GM12878 (cell line): ENCODE measurements at regions of chr14 and their contacts with region 1.

Region 1: DNA sequence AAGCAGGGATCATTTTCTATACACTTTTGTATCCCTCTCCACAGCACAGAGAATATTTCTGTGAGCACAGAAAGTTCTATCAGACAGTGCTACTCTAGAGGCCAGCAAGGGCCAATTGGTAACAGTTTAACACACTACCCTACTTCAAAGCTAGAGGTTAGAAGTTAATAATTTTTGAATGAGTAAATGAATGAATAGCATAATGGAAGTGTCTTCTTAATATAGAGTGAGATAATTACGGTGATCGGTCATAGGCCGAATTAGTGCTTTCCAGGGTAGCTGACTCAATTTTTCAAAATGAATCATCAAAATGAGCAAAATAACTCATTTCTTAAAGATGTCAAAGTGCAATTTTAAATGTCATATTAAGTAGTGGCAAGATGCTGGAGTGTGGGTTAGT is 67.0 kb upstream of the CCDC198 start:
- DNase-seq: peak; percentile 38
- ATAC-seq: peak; percentile 90
- H3K4me3 ChIP-seq: no peak overlapping the region
- H3K27ac ChIP-seq: no peak overlapping the region
- H3K4me1 ChIP-seq: no peaks in the 10 kb centered on the region
- H3K27me3 ChIP-seq: no peaks in the 10 kb centered on the region
- CTCF ChIP-seq: no peak
- EP300 ChIP-seq: peak in 1 of 2 experiments; percentile 80; a peak in 2 of 4 replicates
- POLR2A ChIP-seq: no peak
- RAD21 ChIP-seq: no peak

Region 2: GRCh38 chr14:57244106-57244505 is 316.6 kb before region 1 on chr14:
- CTCF ChIA-PET with region 1: no interaction called
- POLR2A ChIA-PET with region 1: no interaction called
- RAD21 ChIA-PET with region 1: no interaction called
- SMC1A ChIA-PET with region 1: no interaction called
- in situ Hi-C with region 1: no loop called
- intact Hi-C with region 1: no loop called
- DNase-seq: no peak
- ATAC-seq: no peak
- H3K4me3 ChIP-seq: no peak overlapping the region
- H3K27ac ChIP-seq: no peak overlapping the region
- H3K4me1 ChIP-seq: no peaks in the 10 kb centered on the region
- H3K27me3 ChIP-seq: no peaks in the 10 kb centered on the region
- CTCF ChIP-seq: no peak
- EP300 ChIP-seq: no peak
- POLR2A ChIP-seq: no peak
- RAD21 ChIP-seq: no peak

Region 3: GRCh38 chr14:57493467-57494181 is 67.1 kb before region 1 on chr14 and contains the start of gene CCDC198:
- CTCF ChIA-PET with region 1: no interaction called
- POLR2A ChIA-PET with region 1: no interaction called
- RAD21 ChIA-PET with region 1: interaction called, 3 read pairs
- SMC1A ChIA-PET with region 1: interaction called, 10 read pairs
- in situ Hi-C with region 1: loop called (anchors 5 kb)
- intact Hi-C with region 1: no loop called
- DNase-seq: peak; percentile 65
- ATAC-seq: peak; percentile 76
- H3K4me3 ChIP-seq: no peak within 1 kb of the TSS
- H3K27ac ChIP-seq: no peak within 1 kb of the TSS
- H3K4me1 ChIP-seq: no peaks in the 10 kb centered on the region
- H3K27me3 ChIP-seq: no peaks in the 10 kb centered on the region
- CTCF ChIP-seq: no peak
- EP300 ChIP-seq: no peak
- POLR2A ChIP-seq: no peak
- RAD21 ChIP-seq: no peak
- polyA plus RNA-seq, gene CCDC198: 1.3 to 1.9 TPM

Region 4: DNA sequence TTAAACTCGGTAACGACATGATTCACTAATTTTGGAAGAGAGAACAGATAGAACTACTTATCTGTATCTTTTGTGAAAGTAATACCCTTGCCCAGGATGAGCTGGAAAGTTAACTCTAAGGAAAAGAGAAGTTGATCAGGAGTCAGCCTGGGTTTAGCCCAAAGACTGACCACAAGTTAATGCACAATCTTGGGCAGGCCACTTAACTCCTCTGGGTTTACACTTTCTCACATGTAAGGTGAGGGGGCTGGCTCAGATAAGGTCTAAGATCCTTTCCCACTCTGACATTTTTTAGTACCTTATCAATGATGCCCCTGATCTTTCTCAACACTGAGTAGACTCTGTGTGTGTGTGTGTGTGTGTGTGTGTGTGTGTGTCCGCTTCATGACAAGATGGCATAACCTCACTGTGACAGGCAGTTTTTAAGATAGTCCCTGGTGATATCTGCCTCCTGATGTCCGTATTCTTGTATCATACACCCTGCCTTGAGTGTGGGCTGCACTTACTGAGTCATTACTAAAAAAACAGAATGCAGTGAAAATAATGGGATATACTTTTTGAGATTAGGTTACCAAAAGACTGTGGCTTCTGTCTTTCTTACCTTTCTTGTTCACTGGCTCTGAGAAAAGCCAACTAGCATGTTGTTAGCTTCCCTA is 10.8 kb before region 1 on chr14:
- CTCF ChIA-PET with region 1: interaction called, 19 read pairs
- POLR2A ChIA-PET with region 1: interaction called, 6 read pairs
- RAD21 ChIA-PET with region 1: interaction called, 26 read pairs
- SMC1A ChIA-PET with region 1: interaction called, 82 read pairs
- in situ Hi-C with region 1: no loop called
- intact Hi-C with region 1: no loop called
- DNase-seq: no peak
- ATAC-seq: peak; percentile 70
- H3K4me3 ChIP-seq: no peak overlapping the region
- H3K27ac ChIP-seq: no peak overlapping the region
- H3K4me1 ChIP-seq: no peaks in the 10 kb centered on the region
- H3K27me3 ChIP-seq: no peaks in the 10 kb centered on the region
- CTCF ChIP-seq: no peak
- EP300 ChIP-seq: no peak
- POLR2A ChIP-seq: no peak
- RAD21 ChIP-seq: no peak

Region 5: DNA sequence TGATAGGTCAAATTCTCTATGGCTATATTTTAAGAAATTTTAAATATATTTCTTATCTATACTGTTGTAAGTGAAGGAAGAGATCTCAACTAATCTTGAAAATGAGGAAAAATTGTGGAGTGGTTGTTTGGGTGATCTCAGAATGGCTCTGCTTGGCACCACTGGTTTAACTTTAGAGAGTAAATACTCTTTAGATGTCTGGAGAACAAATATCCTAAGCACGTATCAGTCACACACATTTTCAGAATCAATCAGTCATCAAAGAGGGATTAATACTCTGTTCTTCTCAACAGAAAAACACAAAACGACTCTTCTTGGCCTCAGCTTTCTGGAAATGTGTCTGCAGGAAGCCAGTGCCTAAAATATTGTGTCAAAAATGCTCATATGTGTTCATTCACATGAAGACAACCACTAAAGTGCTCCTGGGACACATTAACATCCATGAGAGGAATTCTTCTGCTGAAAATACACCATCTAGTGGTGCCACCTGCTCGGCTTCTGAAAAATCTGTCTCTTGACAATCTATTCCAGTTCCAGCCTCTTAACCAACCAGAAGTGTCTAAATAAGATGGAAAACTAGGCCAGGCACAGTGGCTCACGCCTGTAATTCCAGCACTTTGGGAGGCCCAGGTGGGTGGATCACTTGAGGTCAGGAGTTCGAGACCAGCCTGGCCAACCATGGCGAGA is 14.1 kb after region 1 on chr14:
- CTCF ChIA-PET with region 1: interaction called, 18 read pairs
- POLR2A ChIA-PET with region 1: interaction called, 5 read pairs
- RAD21 ChIA-PET with region 1: interaction called, 9 read pairs
- SMC1A ChIA-PET with region 1: interaction called, 32 read pairs
- in situ Hi-C with region 1: no loop called
- intact Hi-C with region 1: no loop called
- DNase-seq: no peak
- ATAC-seq: peak; percentile 44
- H3K4me3 ChIP-seq: no peak overlapping the region
- H3K27ac ChIP-seq: no peak overlapping the region
- H3K4me1 ChIP-seq: no peaks in the 10 kb centered on the region
- H3K27me3 ChIP-seq: no peaks in the 10 kb centered on the region
- CTCF ChIP-seq: peak in 1 of 3 experiments; percentile 37; a peak in 1 of 6 replicates
- EP300 ChIP-seq: no peak
- POLR2A ChIP-seq: no peak
- RAD21 ChIP-seq: no peak